ENCODE measurements at regions of chr10 and their contacts with region 1.

Region 1: DNA sequence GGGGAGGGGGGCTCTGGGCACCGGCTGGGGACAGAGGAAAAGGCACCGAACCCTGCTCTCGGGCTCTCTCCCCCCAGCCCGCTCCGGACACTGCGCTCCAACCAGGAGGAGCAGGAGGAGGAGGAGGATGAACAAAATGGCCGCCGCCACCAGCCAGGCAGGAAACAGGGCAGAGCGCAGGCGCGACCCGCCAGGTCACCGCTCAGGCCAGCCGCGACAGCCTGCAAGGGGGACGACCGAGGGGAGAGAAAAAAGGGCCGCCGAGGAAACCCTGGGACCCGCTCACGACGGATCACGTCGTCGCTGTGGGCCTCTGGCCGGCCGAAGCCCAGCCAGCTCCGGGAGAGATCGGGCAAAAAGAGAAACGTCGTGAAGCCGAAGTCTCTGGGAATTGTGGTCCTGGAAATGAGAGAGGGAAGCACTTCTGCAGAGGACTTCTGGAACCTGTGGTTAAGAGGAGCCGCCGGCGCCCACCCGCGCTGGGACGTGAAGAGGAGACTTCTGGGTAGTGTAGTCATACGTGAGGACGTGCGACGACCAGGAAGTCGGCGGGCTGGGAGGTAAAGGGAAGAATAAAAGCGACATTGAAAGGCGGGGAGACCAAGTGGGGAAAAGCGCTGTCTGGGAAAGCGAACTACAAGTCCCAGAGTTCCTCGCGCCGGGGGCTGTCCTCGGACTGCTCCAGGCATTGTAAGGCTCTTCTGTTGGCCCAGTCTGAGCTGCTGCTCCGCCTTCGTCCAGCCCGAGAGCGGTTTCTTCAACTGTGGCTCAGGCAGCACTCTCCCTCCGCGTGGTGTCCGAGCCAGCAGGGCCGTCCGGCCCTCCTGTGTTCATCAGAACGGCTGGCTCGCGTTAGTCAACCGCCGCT is at the start of gene TIAL1:
- DNase-seq: peak; percentile 98 to 99
- ATAC-seq: peak; percentile 89 to 92
- H3K4me3 ChIP-seq: peak within 1 kb of the TSS; percentile 74 to 96 (median 92)
- H3K27ac ChIP-seq: peak within 1 kb of the TSS; percentile 98 to 100 (median 99)
- H3K4me1 ChIP-seq: peaks cover 29 to 45% of the 10 kb centered on the region in 2 donors
- H3K27me3 ChIP-seq: no peaks in the 10 kb centered on the region
- CTCF ChIP-seq: no peak
- POLR2A ChIP-seq: peak; percentile 90 to 96
- total RNA-seq, gene TIAL1: 50.5 to 81.5 (median 68.4) TPM

Region 2: GRCh38 chr10:119178372-119179119 is 418.2 kb before region 1 on chr10 and contains the start of gene PRDX3:
- in situ Hi-C with region 1: no loop called
- intact Hi-C with region 1: loop called (anchors 5 kb)
- DNase-seq: peak; percentile 83 to 90
- ATAC-seq: peak; percentile 96 to 97
- H3K4me3 ChIP-seq: peak within 1 kb of the TSS; percentile 74 to 91 (median 87)
- H3K27ac ChIP-seq: peak within 1 kb of the TSS; percentile 90 to 97 (median 94)
- H3K4me1 ChIP-seq: peaks cover 18 to 24% of the 10 kb centered on the region in 2 donors
- H3K27me3 ChIP-seq: no peaks in the 10 kb centered on the region
- CTCF ChIP-seq: peak in 3 of 5 experiments; percentile 36 to 56 (median 50)
- POLR2A ChIP-seq: peak; percentile 65 to 79
- total RNA-seq, gene PRDX3: 227 to 342 (median 250) TPM

Region 3: DNA sequence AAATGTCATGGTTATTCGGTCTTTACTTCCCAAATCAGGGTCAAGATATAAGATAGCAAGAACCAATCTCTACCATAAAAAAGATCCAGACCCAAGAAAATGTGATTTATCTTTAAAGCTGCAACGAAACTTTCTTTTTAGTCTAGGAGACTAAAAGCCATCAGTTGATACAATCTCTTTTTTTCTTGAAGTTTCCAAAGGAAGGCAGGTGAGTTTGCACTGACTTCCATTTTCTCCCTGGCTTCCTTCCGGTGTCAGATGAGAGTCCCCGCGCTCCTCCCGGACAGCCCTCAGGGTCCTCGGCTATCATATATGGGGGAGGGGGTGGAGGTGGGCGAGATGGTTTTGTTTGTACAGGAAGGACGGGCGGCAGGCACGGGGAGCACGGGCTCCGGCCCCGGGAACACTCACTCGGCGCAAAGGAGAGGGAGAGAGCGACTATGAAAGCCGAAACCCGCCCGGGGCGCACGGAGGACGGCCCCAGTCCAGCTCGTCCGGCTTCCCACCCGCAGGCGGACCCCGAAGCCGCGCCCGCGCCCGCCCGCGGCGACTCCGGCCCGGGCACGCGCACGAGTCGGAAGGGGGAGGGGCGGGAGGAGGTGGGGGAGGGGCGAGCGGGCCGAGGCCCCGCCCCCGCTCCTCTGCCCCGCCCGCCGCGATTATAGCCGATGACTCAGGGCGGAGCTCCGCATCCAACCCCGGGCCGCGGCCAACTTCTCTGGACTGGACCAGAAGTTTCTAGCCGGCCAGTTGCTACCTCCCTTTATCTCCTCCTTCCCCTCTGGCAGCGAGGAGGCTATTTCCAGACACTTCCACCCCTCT is 54.1 kb after region 1 on chr10 and contains the start of gene BAG3:
- in situ Hi-C with region 1: loop called in 1 of 4 experiments (anchors 10 kb)
- intact Hi-C with region 1: loop called (anchors 1 kb)
- DNase-seq: peak; percentile 97 to 98
- ATAC-seq: peak; percentile 81 to 83
- H3K4me3 ChIP-seq: peak within 1 kb of the TSS; percentile 80 to 85 (median 81)
- H3K27ac ChIP-seq: peak within 1 kb of the TSS; percentile 91 to 99 (median 97)
- H3K4me1 ChIP-seq: peaks cover 20 to 27% of the 10 kb centered on the region in 2 donors
- H3K27me3 ChIP-seq: no peaks in the 10 kb centered on the region
- CTCF ChIP-seq: no peak
- POLR2A ChIP-seq: no peak
- total RNA-seq, gene BAG3: 337 to 626 (median 393) TPM

Region 4: DNA sequence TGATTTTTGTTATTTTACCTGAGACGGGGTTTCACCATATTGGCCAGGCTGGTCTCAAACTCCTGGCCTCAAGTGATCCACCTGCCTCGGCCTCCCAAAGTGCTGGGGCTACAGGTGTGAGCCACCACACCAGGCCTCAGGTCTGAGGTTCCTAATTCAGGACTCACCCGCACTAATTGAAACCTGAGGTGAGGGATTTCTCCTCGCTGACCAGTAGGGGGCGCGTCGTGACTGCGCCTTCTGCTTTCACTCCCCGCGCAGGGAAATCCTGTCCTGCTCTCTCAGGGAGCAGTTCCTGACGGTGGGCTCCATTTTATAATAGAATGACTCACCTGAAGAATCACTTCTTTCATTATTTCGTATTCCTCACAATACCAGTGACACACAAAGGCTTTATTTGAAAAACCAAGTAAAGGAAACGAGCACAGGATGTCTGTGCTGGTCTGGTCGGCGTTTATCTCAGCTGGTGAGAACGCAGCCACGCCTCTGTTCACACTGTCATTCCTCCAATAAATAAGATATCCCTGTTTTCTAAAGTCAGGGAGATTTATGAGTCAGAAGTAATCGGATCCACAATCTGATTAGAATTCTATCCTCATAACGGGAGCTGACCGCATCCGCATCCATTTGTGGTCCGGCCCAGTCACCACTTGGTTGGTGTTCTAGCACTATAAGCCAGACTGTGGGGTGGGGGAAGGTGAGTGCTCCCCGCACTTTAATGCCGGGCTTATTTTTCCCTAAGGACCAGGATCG is 89.8 kb after region 1 on chr10:
- in situ Hi-C with region 1: loop called in 1 of 4 experiments (anchors 10 kb)
- intact Hi-C with region 1: loop called (anchors 5 kb)
- DNase-seq: peak; percentile 55 to 63
- ATAC-seq: peak; percentile 59 to 75
- H3K4me3 ChIP-seq: peak overlapping the region in 1 of 4 donors; percentile 22
- H3K27ac ChIP-seq: peak overlapping the region; percentile 38 to 48 (median 44)
- H3K4me1 ChIP-seq: peaks cover 11 to 12% of the 10 kb centered on the region in 2 donors
- H3K27me3 ChIP-seq: no peaks in the 10 kb centered on the region
- CTCF ChIP-seq: peak; percentile 90 to 96 (median 93)
- POLR2A ChIP-seq: no peak

Region 5: DNA sequence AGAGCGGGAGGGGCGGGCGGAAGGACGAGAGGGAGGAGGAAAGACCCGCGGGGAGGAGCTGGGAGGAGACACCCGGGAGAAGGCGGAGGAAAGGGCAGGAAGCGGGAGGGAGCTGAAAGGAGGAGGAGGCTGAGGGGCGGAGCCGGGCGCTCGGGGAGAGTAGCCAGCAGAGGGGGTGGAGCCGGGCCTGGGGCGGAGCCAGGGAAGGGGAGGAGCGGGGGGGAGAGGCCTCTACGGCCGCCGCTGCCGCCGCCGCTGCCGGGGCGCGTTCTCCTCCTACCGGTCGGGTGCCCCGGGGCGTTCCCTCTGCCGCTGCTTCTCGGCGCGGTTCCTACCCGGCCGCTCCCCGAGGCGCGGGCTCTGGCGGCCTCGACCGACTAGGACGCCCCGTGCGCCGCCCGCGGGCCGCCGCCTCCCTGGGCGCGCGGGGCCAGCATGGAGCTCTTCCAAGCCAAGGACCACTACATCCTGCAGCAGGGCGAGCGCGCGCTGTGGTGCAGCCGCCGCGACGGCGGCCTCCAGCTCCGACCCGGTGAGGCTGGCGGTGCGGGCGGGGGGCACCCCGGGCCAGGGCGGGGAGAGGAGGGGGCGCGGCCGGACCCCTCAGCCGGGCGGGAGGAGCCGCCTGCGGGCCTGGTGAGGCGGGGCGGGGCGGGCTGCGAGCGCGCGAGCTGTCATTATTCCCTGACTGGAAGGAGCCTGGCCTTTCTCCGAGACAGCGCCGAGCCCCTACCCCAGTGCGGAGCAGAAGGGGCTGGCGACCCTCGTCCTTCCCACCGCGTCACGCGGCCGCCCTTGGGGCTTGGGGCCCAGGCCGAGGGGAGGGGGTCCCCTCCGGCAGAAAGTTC is 129.3 kb after region 1 on chr10 and contains the start of gene INPP5F:
- in situ Hi-C with region 1: loop called in 2 of 4 experiments (anchors 25 kb)
- intact Hi-C with region 1: loop called (anchors 1 kb)
- DNase-seq: peak; percentile 99
- ATAC-seq: peak; percentile 94 to 96
- H3K4me3 ChIP-seq: peak within 1 kb of the TSS; percentile 74 to 93 (median 82)
- H3K27ac ChIP-seq: peak within 1 kb of the TSS; percentile 92 to 96 (median 94)
- H3K4me1 ChIP-seq: peaks cover 18 to 26% of the 10 kb centered on the region in 2 donors
- H3K27me3 ChIP-seq: no peaks in the 10 kb centered on the region
- CTCF ChIP-seq: peak; percentile 28 to 56 (median 41)
- POLR2A ChIP-seq: peak; percentile 75 to 77
- total RNA-seq, gene INPP5F: 8.7 to 11.6 (median 10.5) TPM

Region 6: DNA sequence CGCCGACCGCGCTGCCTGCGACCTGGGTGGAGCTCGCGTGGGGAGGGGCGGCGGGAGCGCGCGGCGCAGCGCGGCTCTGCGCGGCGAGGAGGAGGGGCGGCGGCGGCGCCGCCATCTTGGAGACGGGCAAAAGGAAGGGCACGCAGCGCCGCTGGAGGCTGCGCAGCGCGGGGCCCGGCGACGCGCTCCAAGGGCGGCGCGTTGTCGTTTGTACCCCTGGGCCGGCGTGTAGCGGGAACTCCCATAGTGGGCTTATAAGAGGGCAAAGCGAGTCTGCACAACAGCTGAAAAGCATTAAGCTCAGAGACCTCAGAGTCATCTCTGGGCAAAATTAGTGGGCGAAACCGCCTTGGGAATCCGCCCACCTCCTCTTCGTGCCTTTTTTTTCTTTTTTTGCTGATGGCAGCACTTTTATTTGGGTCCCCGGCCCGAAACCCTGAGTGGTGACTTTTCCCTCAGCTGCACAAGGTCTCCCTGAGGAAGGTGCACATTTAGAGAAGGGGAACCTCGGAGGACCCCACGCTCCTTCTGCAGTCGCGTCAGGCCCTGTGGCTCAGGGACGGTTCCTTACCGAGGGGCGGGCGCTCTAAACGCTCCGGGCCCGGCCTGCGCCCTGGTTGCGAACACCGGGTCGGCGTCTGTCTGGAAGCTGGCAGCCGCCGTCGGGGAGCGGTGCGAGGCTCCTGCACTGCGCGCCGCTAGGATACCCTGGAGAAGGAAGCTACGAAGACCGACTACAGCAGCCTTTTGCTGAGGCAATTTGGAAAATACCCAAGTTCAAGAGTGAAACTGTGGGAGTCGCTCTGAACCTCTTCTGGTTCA is 276.3 kb after region 1 on chr10:
- in situ Hi-C with region 1: loop called in 3 of 4 experiments (anchors 10 to 25 kb)
- intact Hi-C with region 1: loop called (anchors 1 kb)
- DNase-seq: peak; percentile 71 to 81
- ATAC-seq: peak; percentile 92 to 93
- H3K4me3 ChIP-seq: peak overlapping the region; percentile 85 to 96 (median 90)
- H3K27ac ChIP-seq: peak overlapping the region; percentile 89 to 97 (median 92)
- H3K4me1 ChIP-seq: peaks cover 17 to 28% of the 10 kb centered on the region in 2 donors
- H3K27me3 ChIP-seq: no peaks in the 10 kb centered on the region
- CTCF ChIP-seq: peak in 1 of 5 experiments; percentile 2
- POLR2A ChIP-seq: peak in 1 of 2 donors; percentile 42

Region 7: GRCh38 chr10:119892188-119893065 is 295.7 kb after region 1 on chr10 and contains the start of gene SEC23IP:
- in situ Hi-C with region 1: no loop called
- intact Hi-C with region 1: loop called (anchors 1 kb)
- DNase-seq: peak; percentile 94 to 96
- ATAC-seq: peak; percentile 100
- H3K4me3 ChIP-seq: peak within 1 kb of the TSS; percentile 85 to 100 (median 98)
- H3K27ac ChIP-seq: peak within 1 kb of the TSS; percentile 88 to 97 (median 94)
- H3K4me1 ChIP-seq: peaks cover 33 to 34% of the 10 kb centered on the region in 2 donors
- H3K27me3 ChIP-seq: no peaks in the 10 kb centered on the region
- CTCF ChIP-seq: peak in 2 of 5 experiments; percentile 8 to 18
- POLR2A ChIP-seq: peak; percentile 75 to 90
- total RNA-seq, gene SEC23IP: 12.6 to 28.6 (median 21.6) TPM

Measured in gastrocnemius medialis (tissue), 4 donors.